Naive thymus-derived CD8-positive, alpha-beta T cell (primary cell): ENCODE measurements at regions of chr18 and their contacts with region 1.

Region 1: GRCh38 chr18:70621710-70622109 is 332.9 kb downstream of the SOCS6 start:
- DNase-seq: peak in 8 of 10 donors; percentile 17 to 76 (median 48)
- ATAC-seq: peak; percentile 81 to 86
- H3K4me3 Mint-ChIP-seq: peak overlapping the region; percentile 81 to 97 (median 91)
- H3K27ac Mint-ChIP-seq: peak overlapping the region; percentile 95 to 100 (median 100)
- H3K4me1 Mint-ChIP-seq: peaks cover 40 to 87% (median 79%) of the 10 kb centered on the region in 4 donors
- H3K27me3 Mint-ChIP-seq: no peaks in the 10 kb centered on the region

Region 2: DNA sequence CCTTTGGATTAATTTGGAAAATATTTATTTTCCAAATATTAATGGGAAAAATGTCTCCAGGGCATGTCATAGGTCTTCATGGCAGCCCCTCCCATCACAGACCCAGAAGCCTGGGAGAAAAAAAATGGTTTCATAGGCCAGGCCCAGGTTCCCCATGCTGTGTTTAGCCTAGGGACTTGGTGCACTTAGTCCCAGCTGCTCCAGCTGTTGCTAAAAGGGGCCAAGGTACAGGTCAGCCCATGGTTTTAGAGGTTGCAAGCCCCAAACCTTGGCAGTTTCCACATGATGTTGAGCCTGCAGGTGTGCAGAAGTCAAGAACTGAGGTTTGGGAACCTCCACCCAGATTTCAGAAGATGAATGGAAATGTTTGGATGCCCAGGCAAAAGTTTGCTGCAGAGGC is 23.3 kb before region 1 on chr18:
- POLR2A ChIA-PET with region 1: interaction called, 47 read pairs
- DNase-seq: no peak
- ATAC-seq: peak in 1 of 2 donors; percentile 7
- H3K4me3 Mint-ChIP-seq: peak overlapping the region in 1 of 10 donors; percentile 67
- H3K27ac Mint-ChIP-seq: peak overlapping the region in 6 of 10 donors; percentile 78 to 92 (median 84)
- H3K4me1 Mint-ChIP-seq: peaks cover 6 to 29% (median 12%) of the 10 kb centered on the region in 4 donors
- H3K27me3 Mint-ChIP-seq: no peaks in the 10 kb centered on the region

Region 3: DNA sequence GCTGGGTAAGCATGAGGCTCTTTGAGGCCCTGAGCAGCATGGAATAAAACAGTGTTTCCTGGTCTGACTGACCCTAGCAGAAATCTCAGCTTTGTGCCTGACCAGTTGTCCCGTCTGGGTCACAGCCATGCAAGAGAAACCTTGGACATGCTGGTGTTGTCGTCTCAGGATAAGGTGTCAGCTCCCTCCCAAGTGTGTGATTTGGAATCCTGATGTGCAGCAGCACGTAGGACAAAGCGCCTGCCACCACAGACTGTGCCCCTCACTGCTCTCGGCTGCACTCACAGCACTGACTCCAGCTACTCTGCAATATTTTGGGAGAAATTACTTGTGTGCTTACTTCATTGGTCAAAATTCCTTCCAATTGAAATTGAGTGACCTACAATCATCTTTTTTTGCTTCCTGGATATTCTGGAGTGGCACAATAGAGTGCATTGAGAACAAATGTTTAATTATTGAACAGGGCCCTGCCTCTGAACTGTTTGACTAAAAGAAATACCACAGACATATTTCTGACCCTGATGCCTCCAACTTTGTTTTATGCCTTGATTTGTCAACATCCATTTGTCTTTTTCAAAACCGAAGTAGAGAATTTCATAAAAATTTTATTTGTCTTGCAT is 19.6 kb after region 1 on chr18:
- POLR2A ChIA-PET with region 1: interaction called, 14 read pairs
- DNase-seq: no peak
- ATAC-seq: peak in 1 of 2 donors; percentile 58
- H3K4me3 Mint-ChIP-seq: peak overlapping the region in 7 of 10 donors; percentile 4 to 67 (median 46)
- H3K27ac Mint-ChIP-seq: peak overlapping the region; percentile 56 to 94 (median 74)
- H3K4me1 Mint-ChIP-seq: peaks cover 7 to 47% (median 27%) of the 10 kb centered on the region in 4 donors
- H3K27me3 Mint-ChIP-seq: no peaks in the 10 kb centered on the region

Region 4: GRCh38 chr18:70659036-70659925 is 37.6 kb after region 1 on chr18:
- POLR2A ChIA-PET with region 1: interaction called, 69 read pairs
- DNase-seq: peak; percentile 29 to 90 (median 78)
- ATAC-seq: peak; percentile 88 to 96
- H3K4me3 Mint-ChIP-seq: peak overlapping the region; percentile 48 to 76 (median 68)
- H3K27ac Mint-ChIP-seq: peak overlapping the region; percentile 94 to 100 (median 96)
- H3K4me1 Mint-ChIP-seq: peaks cover 25 to 65% (median 59%) of the 10 kb centered on the region in 4 donors
- H3K27me3 Mint-ChIP-seq: no peaks in the 10 kb centered on the region

Region 5: DNA sequence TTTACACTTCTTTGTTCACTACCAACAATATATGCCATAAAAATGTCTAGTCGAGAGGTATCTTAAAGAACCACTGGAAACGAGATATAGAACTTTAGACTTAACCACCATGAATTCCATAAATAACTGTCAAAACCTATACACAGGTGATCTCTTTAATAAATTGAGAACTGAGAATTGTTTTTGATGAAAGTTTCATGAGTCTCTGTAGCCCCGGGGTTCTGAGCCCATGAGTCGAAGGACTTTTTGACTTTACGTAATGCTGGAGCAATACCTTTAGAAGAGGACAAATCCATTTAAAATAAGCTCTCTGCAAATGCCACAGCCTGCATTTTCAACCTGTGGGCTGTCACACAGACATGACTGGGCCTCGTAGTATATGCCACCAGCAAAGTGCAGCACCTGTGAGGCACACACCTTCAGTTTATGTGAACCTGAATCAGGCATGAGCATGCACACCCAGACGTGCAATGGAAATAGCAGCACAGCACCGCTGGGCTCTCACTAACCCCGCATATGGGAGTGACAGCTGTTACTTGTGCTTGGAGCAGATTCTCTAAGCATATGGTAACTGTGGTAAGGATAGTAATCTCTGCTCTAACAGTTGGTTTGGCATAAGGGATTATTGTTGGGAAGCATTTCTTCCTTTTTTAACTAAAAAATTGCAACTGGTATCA is 50.3 kb after region 1 on chr18:
- POLR2A ChIA-PET with region 1: interaction called, 87 read pairs
- DNase-seq: peak in 5 of 10 donors; percentile 11 to 65 (median 19)
- ATAC-seq: peak; percentile 46 to 55
- H3K4me3 Mint-ChIP-seq: peak overlapping the region in 8 of 10 donors; percentile 5 to 59 (median 40)
- H3K27ac Mint-ChIP-seq: peak overlapping the region; percentile 76 to 98 (median 94)
- H3K4me1 Mint-ChIP-seq: peaks cover 11 to 67% (median 59%) of the 10 kb centered on the region in 4 donors
- H3K27me3 Mint-ChIP-seq: no peaks in the 10 kb centered on the region

Region 6: DNA sequence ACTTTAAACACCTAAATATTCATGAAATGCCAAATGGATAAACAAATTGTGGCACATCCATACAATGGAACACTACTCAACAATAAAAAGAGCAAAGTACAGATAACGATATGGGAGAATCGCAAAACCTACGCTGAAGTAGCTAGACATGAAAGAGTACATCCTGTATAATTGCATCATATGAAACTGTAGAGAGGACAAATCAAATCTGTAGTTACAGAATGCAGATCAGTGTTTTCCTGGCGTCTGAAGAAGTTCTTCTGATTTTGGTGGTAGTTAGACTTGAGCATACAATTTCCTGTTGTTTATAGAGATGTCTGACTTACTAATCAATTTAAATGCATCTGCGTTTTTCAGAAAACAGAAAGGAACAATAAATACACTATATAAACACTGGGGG is 61.6 kb after region 1 on chr18:
- POLR2A ChIA-PET with region 1: interaction called, 14 read pairs
- DNase-seq: peak in 3 of 10 donors; percentile 48 to 61 (median 59)
- ATAC-seq: peak; percentile 84 to 94
- H3K4me3 Mint-ChIP-seq: peak overlapping the region in 7 of 10 donors; percentile 8 to 53 (median 19)
- H3K27ac Mint-ChIP-seq: peak overlapping the region; percentile 78 to 96 (median 90)
- H3K4me1 Mint-ChIP-seq: peaks cover 12 to 31% (median 24%) of the 10 kb centered on the region in 4 donors
- H3K27me3 Mint-ChIP-seq: no peaks in the 10 kb centered on the region